ENCODE measurements at regions of chr1 and their contacts with region 1.

Region 1: DNA sequence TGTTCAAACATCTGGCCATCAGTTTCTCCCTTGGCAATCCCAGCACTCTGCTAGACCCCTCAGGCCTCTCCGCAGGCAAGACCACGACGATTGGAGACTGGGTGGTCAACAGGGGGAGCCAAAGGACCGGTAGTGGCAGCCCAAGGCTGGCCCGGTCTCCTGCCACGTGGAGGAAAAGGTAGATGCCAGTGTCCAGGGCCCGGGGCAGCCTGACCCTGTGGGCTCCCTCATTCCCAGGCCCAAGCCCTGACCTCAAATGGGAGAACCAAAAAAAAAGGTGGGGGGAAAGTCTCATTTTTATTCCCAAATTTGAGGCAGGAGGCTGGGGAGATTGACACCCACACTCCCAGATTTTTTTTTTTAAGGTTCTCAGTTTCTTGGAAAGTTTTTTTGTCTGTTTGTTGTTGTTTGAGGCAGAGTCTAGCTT is 24.8 kb downstream of the S100A6 start:
- DNase-seq: peak; percentile 59 to 79
- ATAC-seq: peak; percentile 55 to 63
- H3K4me3 ChIP-seq: no peak overlapping the region
- H3K27ac ChIP-seq: no peak overlapping the region
- H3K4me1 ChIP-seq: peaks cover 17 to 18% of the 10 kb centered on the region in 2 donors
- H3K27me3 ChIP-seq: no peaks in the 10 kb centered on the region
- CTCF ChIP-seq: peak; percentile 82 to 95 (median 91)
- POLR2A ChIP-seq: no peak

Region 2: DNA sequence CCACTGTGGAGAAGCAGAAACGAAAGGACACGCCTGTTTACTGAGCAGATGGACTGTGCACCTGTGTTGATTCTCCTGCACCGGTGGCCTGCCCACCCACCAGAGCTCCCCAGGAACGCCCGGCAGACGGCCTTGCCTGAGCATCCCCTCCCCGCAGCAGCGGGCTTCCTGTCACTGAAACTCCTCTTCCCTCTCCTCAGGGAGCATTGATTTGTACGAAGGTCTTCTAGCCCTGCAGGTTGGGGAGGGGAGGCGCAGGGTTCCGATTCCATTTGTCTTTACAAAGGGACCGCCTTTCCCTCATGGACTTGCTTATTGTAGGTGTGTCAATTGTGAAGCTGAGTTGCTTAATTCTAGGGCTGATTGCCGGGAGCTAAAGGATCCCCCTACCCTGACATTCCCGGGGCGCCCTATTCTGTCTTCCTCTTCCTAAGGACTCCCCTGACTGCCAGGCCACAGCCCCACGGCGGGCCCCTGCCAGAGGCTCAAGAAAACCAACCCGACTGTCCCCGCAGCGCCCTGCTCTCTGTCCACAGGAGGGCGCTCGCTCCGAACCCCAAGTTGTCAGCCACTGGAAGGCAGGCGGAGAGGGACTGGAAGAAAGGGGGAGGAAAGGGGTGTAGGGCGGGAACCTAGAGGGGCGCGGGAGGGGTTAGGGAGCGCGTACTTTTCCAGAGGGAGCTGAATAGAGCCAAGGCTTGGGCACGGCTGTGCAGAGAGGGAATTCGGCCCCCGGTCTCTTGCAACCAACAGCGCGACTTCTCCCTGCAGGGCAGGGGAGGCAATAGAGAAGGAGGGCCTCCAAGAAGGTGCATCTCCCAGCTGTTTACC is 22.0 kb after region 1 on chr1:
- in situ Hi-C with region 1: no loop called
- intact Hi-C with region 1: loop called (anchors 2 kb)
- DNase-seq: peak; percentile 71 to 84
- ATAC-seq: peak; percentile 54 to 59
- H3K4me3 ChIP-seq: peak overlapping the region; percentile 54 to 70 (median 65)
- H3K27ac ChIP-seq: peak overlapping the region; percentile 82 to 92 (median 86)
- H3K4me1 ChIP-seq: peaks cover 10 to 28% of the 10 kb centered on the region in 2 donors
- H3K27me3 ChIP-seq: no peaks in the 10 kb centered on the region
- CTCF ChIP-seq: peak; percentile 90 to 93 (median 91)
- POLR2A ChIP-seq: no peak

Region 3: GRCh38 chr1:153566440-153567379 is 55.7 kb after region 1 on chr1:
- in situ Hi-C with region 1: loop called (anchors 5 to 10 kb)
- intact Hi-C with region 1: loop called (anchors 1 kb)
- DNase-seq: peak; percentile 98 to 100
- ATAC-seq: peak; percentile 78 to 84
- H3K4me3 ChIP-seq: peak overlapping the region in 1 of 4 donors; percentile 8
- H3K27ac ChIP-seq: peak overlapping the region; percentile 87 to 94 (median 92)
- H3K4me1 ChIP-seq: peaks cover 27 to 38% of the 10 kb centered on the region in 2 donors
- H3K27me3 ChIP-seq: no peaks in the 10 kb centered on the region
- CTCF ChIP-seq: no peak
- POLR2A ChIP-seq: peak; percentile 48 to 53

Region 4: GRCh38 chr1:153572569-153573015 is 61.6 kb after region 1 on chr1:
- in situ Hi-C with region 1: loop called in 3 of 4 experiments (anchors 10 kb)
- intact Hi-C with region 1: loop called (anchors 1 kb)
- DNase-seq: peak; percentile 80 to 88
- ATAC-seq: peak; percentile 83 to 86
- H3K4me3 ChIP-seq: no peak overlapping the region
- H3K27ac ChIP-seq: peak overlapping the region; percentile 59 to 77 (median 67)
- H3K4me1 ChIP-seq: peaks cover 14 to 27% of the 10 kb centered on the region in 2 donors
- H3K27me3 ChIP-seq: no peaks in the 10 kb centered on the region
- CTCF ChIP-seq: peak; percentile 78 to 90 (median 84)
- POLR2A ChIP-seq: no peak

Region 5: GRCh38 chr1:153617675-153618074 is 106.7 kb after region 1 on chr1:
- in situ Hi-C with region 1: loop called in 1 of 4 experiments (anchors 5 kb)
- intact Hi-C with region 1: loop called (anchors 5 kb)
- DNase-seq: peak in 1 of 2 donors; percentile 75
- ATAC-seq: peak in 1 of 2 donors; percentile 64
- H3K4me3 ChIP-seq: no peak overlapping the region
- H3K27ac ChIP-seq: peak overlapping the region in 3 of 4 donors; percentile 16 to 66 (median 57)
- H3K4me1 ChIP-seq: peaks cover 3 to 7% of the 10 kb centered on the region in 2 donors
- H3K27me3 ChIP-seq: no peaks in the 10 kb centered on the region
- CTCF ChIP-seq: peak in 4 of 5 experiments; percentile 51 to 86 (median 60)
- POLR2A ChIP-seq: no peak

Region 6: GRCh38 chr1:153749408-153750005 is 238.5 kb after region 1 on chr1:
- in situ Hi-C with region 1: loop called in 2 of 4 experiments (anchors 10 kb)
- intact Hi-C with region 1: loop called (anchors 1 kb)
- DNase-seq: peak; percentile 88 to 93
- ATAC-seq: peak; percentile 78 to 88
- H3K4me3 ChIP-seq: no peak overlapping the region
- H3K27ac ChIP-seq: peak overlapping the region; percentile 68 to 95 (median 83)
- H3K4me1 ChIP-seq: peaks cover 36 to 51% of the 10 kb centered on the region in 2 donors
- H3K27me3 ChIP-seq: no peaks in the 10 kb centered on the region
- CTCF ChIP-seq: peak; percentile 88 to 95 (median 91)
- POLR2A ChIP-seq: peak in 1 of 2 donors; percentile 38

Measured in gastrocnemius medialis (tissue), 4 donors.